BJ (cell line): ENCODE measurements at regions of chr6 and their contacts with region 1.

Region 1: GRCh38 chr6:73200735-73201134 is 24.6 kb downstream of the KHDC1L start:
- DNase-seq: no peak
- H3K4me3 ChIP-seq: no peak overlapping the region
- H3K27me3 ChIP-seq: no peaks in the 10 kb centered on the region
- CTCF ChIP-seq: no peak

Region 2: GRCh38 chr6:73236147-73236750 is 35.5 kb after region 1 on chr6:
- CTCF ChIA-PET with region 1: no interaction called
- POLR2A ChIA-PET with region 1: interaction called, 13 read pairs
- DNase-seq: peak; percentile 94
- H3K4me3 ChIP-seq: no peak overlapping the region
- H3K27me3 ChIP-seq: no peaks in the 10 kb centered on the region
- CTCF ChIP-seq: no peak